ENCODE measurements at regions of chr11 and their contacts with region 1.

Region 1: DNA sequence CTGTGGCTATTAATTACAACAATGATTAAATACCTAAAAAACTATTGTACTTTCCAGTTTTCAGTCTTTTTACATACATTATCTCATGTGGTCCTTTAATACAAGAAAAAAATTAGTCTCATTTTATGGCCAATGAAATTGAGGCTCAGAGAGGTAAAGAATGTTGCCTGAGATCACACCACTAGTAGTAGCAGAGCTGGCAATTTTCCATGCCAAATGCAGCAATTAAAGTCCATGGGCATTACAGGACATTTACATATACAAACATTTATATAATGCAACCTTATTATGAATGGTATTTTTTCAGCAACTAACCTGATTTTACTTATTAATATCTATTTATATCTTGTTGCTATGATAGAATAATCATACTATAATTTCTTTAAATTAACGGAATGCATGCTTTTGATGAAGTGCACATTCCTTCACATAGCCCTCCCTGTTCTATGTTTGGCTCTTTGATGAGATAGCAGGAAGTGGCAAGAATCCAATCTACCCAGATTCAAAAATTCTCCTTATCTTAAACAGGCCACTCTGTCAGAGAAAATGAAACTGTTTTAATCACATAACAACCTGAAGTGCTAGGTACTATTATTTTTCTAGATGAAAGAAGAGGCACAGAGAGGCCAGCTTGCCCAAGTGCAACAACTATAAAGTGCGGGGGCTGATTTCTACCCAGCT is 120.9 kb upstream of the LDLRAD3 start:
- DNase-seq: no peak
- H3K4me3 ChIP-seq: no peak overlapping the region
- H3K27ac ChIP-seq: no peak overlapping the region
- H3K27me3 ChIP-seq: no peaks in the 10 kb centered on the region
- CTCF ChIP-seq: no peak

Region 2: DNA sequence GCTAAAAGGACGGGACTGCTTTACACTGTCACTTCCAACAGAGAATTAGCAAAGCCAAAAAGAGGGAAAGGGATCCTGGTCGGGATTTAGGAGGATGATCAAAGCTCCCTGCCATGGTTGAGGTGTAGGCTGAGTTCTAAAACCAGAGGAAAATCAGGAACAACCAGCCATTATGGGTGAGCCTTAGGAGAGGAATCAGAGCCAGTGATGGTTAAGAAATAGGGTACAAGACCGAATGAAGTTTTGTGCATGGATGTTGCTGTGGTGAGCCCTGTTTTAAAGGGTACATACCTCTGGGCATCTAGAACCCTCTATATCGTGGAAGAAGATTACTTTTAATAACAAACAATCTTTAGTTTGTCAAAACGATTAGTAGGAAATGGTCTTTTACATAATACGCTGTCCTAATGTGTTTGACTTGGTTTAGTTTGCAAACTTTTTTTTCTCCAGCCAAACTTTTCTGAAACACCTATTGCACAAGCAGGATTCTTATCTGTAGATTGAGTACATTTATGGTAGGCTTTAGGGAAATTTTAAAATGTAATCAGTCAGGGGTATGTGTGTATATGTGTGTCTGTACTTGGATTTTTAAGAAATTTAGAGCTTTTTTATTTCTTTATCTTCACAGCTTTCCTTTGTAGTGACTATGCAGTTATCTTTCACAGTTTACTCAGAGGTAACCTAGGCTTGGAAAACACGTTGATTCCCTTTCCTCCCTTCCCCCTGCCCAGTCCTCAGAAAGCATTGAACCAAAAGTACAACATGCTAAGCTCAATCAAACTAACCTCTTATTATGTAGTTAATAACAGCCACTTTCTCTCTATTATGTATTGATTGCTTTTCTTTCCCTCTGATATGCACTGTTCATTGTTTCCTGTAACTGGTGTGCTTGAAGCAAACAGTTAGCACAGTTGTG is 133.6 kb before region 1 on chr11:
- CTCF ChIA-PET with region 1: interaction called, 13 read pairs
- POLR2A ChIA-PET with region 1: no interaction called
- DNase-seq: no peak
- H3K4me3 ChIP-seq: no peak overlapping the region
- H3K27ac ChIP-seq: no peak overlapping the region
- H3K27me3 ChIP-seq: no peaks in the 10 kb centered on the region
- CTCF ChIP-seq: no peak

Region 3: GRCh38 chr11:35811775-35812174 is 11.2 kb before region 1 on chr11:
- CTCF ChIA-PET with region 1: interaction called, 88 read pairs
- POLR2A ChIA-PET with region 1: no interaction called
- DNase-seq: no peak
- H3K4me3 ChIP-seq: no peak overlapping the region
- H3K27ac ChIP-seq: no peak overlapping the region
- H3K27me3 ChIP-seq: no peaks in the 10 kb centered on the region
- CTCF ChIP-seq: no peak

Region 4: DNA sequence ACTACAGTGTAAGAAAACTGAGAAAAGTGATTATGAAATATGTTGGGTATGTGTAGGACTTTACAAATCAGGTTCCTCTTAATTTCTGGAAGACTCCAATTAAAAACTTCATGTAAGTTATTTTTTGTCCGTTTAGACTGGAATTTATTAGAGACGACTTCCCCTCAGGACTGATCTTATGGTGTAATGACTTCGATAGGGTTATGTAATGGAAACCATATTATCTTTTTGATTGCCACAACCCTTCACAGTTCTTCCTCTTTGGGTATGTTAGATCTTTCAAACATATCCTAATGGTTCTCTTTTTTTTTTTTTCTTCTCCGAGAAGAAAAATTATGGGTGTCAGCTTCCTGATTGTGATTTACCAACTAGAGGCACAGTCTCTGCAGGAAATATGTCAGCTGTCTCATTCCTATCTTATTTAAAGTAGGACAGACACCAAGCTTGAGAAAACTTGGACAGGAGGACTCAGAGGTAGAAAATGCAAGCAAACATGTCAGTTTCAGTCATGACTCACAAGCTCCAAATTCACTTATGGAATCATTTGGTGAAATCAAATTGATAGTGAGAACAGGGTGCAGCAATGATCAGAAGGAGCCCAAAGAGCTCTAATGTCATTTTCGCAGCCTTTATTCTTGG is 109.8 kb after region 1 on chr11:
- CTCF ChIA-PET with region 1: interaction called, 14 read pairs
- POLR2A ChIA-PET with region 1: no interaction called
- DNase-seq: no peak
- H3K4me3 ChIP-seq: no peak overlapping the region
- H3K27ac ChIP-seq: no peak overlapping the region
- H3K27me3 ChIP-seq: no peaks in the 10 kb centered on the region
- CTCF ChIP-seq: no peak

Region 5: DNA sequence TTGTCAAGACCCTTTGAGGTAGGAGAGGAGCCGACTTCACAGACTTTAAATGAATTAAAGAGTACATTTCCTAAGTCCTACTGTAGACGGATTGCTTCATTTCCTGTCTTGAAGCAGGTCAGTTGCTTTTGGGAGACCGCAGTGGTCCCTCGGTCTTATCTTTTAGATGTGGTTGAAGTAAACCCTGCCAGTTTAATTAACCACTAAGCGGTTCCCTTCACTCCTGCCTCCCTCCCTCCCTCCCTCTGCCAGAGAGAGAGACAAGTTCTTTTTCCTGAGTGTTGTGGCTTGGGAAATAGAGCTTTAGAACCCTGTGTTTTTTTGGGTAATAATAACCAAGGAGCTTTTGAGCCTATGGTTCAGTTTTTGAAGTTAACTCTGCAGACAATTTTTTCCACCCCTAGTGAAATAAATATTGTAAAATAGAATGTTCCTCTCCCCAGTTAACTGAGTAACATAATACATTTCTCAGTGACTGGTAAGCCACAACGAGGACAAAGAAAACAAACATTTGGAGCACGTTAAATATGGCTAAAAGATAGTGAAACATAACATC is 268.4 kb after region 1 on chr11:
- CTCF ChIA-PET with region 1: interaction called, 16 read pairs
- POLR2A ChIA-PET with region 1: no interaction called
- DNase-seq: peak; percentile 13
- H3K4me3 ChIP-seq: no peak overlapping the region
- H3K27ac ChIP-seq: no peak overlapping the region
- H3K27me3 ChIP-seq: no peaks in the 10 kb centered on the region
- CTCF ChIP-seq: no peak

Region 6: GRCh38 chr11:36265793-36266628 is 443.1 kb after region 1 on chr11:
- CTCF ChIA-PET with region 1: interaction called, 144 read pairs
- POLR2A ChIA-PET with region 1: no interaction called
- DNase-seq: no peak
- H3K4me3 ChIP-seq: no peak overlapping the region
- H3K27ac ChIP-seq: no peak overlapping the region
- H3K27me3 ChIP-seq: peaks cover 8% of the 10 kb centered on the region
- CTCF ChIP-seq: peak; percentile 89

Region 7: DNA sequence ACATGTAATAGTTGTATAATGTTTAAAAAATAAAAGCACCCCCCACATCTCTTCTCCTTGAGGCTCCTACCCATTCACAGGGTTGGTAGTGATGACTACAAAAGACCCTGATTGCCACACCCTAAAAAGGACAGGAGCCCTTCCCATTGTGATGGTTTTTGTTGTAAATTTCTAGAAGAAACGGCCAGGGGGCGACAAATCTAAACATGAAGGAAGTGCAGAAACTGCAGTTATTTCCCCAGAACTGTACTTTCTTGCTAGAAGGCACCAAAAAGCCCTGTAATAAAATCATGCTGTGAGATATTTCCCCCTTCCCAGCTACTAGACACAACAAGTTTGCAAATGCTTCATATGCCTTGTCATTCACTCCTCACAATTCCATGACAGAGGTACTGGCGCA is 483.9 kb after region 1 on chr11:
- CTCF ChIA-PET with region 1: no interaction called
- POLR2A ChIA-PET with region 1: no interaction called
- DNase-seq: no peak
- H3K4me3 ChIP-seq: no peak overlapping the region
- H3K27ac ChIP-seq: no peak overlapping the region
- H3K27me3 ChIP-seq: peaks cover 2% of the 10 kb centered on the region
- CTCF ChIP-seq: peak; percentile 74

Measured in AG04450 (cell line).